ENCODE measurements at regions of chr15 and their contacts with region 1.

Region 1: DNA sequence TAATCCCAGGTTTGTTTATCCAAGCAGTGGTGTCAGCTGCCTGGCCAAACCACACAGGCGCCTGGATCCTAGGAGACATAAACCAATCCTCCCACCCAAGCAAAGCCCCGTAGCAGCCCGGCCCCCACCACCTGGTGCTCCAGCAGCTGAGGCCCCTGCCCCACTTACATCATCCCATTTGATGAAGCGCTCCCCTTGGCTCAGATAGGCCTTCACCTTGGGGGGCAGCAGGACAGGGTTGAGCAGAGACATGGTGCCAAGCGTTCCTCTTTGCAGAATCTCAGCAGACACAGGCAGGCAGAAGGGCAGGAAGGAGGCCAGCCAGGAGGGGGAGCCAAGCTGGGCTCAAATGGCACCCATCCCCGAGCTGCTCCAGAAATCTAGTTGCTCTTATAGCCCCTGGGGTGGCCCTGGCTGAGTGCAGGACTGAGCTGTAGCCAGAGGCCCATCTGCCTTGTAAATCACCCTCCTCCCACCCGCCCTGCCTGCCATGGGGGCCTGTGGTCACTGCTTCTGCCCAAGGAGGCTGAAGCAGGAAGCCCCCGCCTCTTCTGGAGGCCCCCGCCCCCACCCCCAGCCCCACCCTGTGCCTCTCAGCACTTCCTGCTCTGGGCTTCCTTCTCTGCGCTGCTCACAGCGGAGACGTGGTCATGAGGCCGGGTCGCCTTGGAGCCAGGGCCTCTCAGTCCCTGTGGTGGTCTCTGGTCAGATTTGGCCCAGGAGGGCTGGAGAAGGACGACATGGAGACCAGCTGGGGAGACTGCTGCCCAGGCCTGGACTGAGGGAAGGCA is at the start of gene PLCB2:
- H3K4me3 Mint-ChIP-seq: peak within 1 kb of the TSS; percentile 99
- H3K27ac Mint-ChIP-seq: peak within 1 kb of the TSS; percentile 91
- H3K4me1 Mint-ChIP-seq: peaks cover 67% of the 10 kb centered on the region
- H3K27me3 Mint-ChIP-seq: peaks cover 8% of the 10 kb centered on the region

Region 2: GRCh38 chr15:39934397-39935071 is 373.1 kb before region 1 on chr15:
- intact Hi-C with region 1: no loop called
- H3K4me3 Mint-ChIP-seq: peak overlapping the region; percentile 83
- H3K27ac Mint-ChIP-seq: peak overlapping the region; percentile 90
- H3K4me1 Mint-ChIP-seq: peaks cover 55% of the 10 kb centered on the region
- H3K27me3 Mint-ChIP-seq: peaks cover 2% of the 10 kb centered on the region

Region 3: DNA sequence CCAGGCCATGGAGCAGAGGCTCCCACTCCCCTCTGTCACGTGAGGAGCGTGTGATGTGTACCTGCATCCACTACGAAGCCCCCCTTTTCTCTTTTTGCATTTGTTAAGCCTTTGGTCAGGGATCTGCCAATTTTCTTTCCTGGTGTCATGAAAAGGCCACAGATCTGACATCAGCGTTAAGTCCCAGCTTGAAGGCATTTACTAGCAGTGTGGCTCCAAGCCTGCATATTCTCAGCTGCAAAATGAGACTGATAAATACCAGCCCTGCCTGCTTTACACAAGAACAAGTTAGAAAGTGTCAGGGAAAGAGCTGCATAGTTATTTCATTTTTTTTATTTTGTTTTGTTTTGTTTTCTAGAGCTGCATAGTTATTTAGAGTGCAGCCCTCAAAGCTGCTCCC is 22.5 kb before region 1 on chr15:
- intact Hi-C with region 1: loop called (anchors 2 kb)
- H3K4me3 Mint-ChIP-seq: peak overlapping the region; percentile 45
- H3K27ac Mint-ChIP-seq: peak overlapping the region; percentile 91
- H3K4me1 Mint-ChIP-seq: peaks cover 74% of the 10 kb centered on the region
- H3K27me3 Mint-ChIP-seq: peaks cover 29% of the 10 kb centered on the region

Region 4: GRCh38 chr15:40323239-40323952 is 15.8 kb after region 1 on chr15 and contains the start of gene INAFM2:
- intact Hi-C with region 1: no loop called
- H3K4me3 Mint-ChIP-seq: peak within 1 kb of the TSS; percentile 82
- H3K27ac Mint-ChIP-seq: peak within 1 kb of the TSS; percentile 85
- H3K4me1 Mint-ChIP-seq: peaks cover 69% of the 10 kb centered on the region
- H3K27me3 Mint-ChIP-seq: no peaks in the 10 kb centered on the region

Region 5: GRCh38 chr15:40430271-40430805 is 122.7 kb after region 1 on chr15:
- intact Hi-C with region 1: no loop called
- H3K4me3 Mint-ChIP-seq: no peak overlapping the region
- H3K27ac Mint-ChIP-seq: no peak overlapping the region
- H3K4me1 Mint-ChIP-seq: no peaks in the 10 kb centered on the region
- H3K27me3 Mint-ChIP-seq: peaks cover 26% of the 10 kb centered on the region